Posterior vena cava (tissue), 2 donors: ENCODE measurements at regions of chr14 and their contacts with region 1.

Region 1: DNA sequence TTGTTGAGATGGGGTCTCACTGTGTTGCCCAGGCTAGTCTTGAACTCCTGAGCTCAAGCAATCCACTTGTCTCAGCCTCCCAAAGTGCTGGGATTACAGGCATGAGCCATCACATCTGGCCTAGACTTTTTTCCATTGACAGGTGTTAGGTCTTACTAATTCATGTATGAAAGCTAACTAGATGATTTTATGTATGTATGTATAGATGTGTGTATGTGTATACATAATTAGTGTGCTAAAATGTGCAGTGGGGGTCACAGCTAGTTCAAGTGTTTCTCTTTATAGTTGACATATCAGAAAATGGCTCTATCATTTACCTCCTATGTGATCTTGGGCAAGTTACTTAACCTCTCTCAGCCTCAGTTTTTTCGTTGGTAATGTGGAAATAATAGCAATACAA is 23.5 kb downstream of the UNC79 start:
- DNase-seq: no peak

Region 2: DNA sequence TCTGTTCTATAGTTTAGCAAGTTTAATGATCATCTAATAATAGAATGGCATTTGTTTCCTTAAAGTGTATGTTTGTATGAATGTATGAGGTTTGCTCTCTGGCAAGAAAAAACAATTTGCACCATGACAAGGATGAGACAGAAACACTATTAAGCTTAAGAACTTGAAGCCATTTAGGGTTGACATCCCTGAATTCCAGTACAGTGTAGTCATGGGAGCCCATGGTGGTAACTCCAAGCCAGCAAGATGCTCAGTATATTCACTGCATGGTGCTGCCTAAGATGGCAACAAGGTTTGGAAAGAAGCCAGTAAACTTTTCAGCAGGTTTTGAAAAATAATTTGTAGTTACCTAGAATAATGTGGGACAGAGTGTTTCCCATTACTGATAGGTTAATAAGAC is 175.4 kb after region 1 on chr14:
- intact Hi-C with region 1: no loop called
- DNase-seq: no peak

Region 3: GRCh38 chr14:95174184-95174792 is 1720.1 kb after region 1 on chr14:
- intact Hi-C with region 1: loop called in 1 of 2 experiments (anchors 10 kb)
- DNase-seq: no peak